ENCODE measurements at regions of chr2 and their contacts with region 1.

Region 1: DNA sequence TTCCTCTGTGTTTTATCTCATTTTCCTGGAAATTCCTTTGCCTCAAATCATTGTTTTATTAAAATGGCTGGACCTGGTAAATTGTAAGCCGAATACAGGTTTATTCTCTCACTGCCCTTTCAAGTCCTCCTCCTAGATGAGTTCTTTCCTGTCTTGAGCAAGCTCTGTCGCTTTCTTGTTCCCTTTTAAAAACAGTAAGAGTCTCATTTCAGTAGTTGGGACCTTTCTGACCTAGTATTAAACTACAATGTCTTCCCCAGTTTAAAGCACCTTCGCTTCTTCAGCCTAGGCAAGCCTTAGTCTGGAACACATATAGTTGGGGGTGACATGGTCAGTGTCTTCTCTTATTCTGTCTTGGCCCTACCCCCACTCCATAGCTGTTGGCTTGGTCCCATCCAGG is 40.9 kb upstream of the SP140L start:
- DNase-seq: no peak
- H3K4me3 Mint-ChIP-seq: no peak overlapping the region
- H3K27ac Mint-ChIP-seq: no peak overlapping the region
- H3K4me1 Mint-ChIP-seq: peaks cover 25% of the 10 kb centered on the region
- H3K27me3 Mint-ChIP-seq: no peaks in the 10 kb centered on the region

Region 2: DNA sequence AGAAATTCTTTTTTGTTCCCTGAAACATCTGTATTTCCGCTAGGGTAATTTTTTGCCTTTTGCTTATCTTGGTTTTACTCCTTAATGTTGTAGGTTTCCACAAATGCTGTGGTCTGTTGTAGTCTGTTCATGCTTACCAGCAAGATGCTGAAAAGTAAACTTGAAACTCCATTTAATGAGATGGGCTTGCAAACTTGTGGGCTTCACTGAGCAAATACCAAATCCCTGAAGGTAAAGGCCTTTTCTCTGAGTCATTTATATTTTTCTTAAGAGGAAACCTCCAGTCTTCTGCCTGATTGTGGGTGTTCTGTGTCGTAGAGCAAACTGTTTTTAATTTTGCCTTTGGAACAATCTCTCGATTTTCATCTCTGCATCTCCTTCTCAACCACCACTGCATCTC is 51.2 kb before region 1 on chr2:
- intact Hi-C with region 1: loop called (anchors 2 kb)
- DNase-seq: peak; percentile 57
- H3K4me3 Mint-ChIP-seq: peak overlapping the region; percentile 78
- H3K27ac Mint-ChIP-seq: peak overlapping the region; percentile 97
- H3K4me1 Mint-ChIP-seq: peaks cover 44% of the 10 kb centered on the region
- H3K27me3 Mint-ChIP-seq: no peaks in the 10 kb centered on the region

Region 3: GRCh38 chr2:231662028-231662810 is 1376.2 kb after region 1 on chr2:
- intact Hi-C with region 1: no loop called
- DNase-seq: peak; percentile 100
- H3K4me3 Mint-ChIP-seq: peak overlapping the region; percentile 70
- H3K27ac Mint-ChIP-seq: peak overlapping the region; percentile 98
- H3K4me1 Mint-ChIP-seq: peaks cover 22% of the 10 kb centered on the region
- H3K27me3 Mint-ChIP-seq: no peaks in the 10 kb centered on the region